ENCODE measurements at regions of chr5 and their contacts with region 1.

Region 1: GRCh38 chr5:79297661-79298060 is 61.7 kb downstream of the JMY start:
- DNase-seq: no peak
- ATAC-seq: peak; percentile 56 to 89 (median 77)
- H3K4me3 ChIP-seq: no peak overlapping the region
- H3K27ac ChIP-seq: no peak overlapping the region
- H3K4me1 ChIP-seq: peaks cover 0 to 12% (median 0%) of the 10 kb centered on the region in 12 donors
- H3K27me3 ChIP-seq: no peaks in the 10 kb centered on the region
- CTCF ChIP-seq: no peak
- POLR2A ChIP-seq: no peak

Region 2: GRCh38 chr5:79318935-79319614 is 21.4 kb after region 1 on chr5:
- intact Hi-C with region 1: loop called in 1 of 10 experiments (anchors 2 kb)
- DNase-seq: no peak
- ATAC-seq: peak; percentile 60 to 98 (median 80)
- H3K4me3 ChIP-seq: no peak overlapping the region
- H3K27ac ChIP-seq: no peak overlapping the region
- H3K4me1 ChIP-seq: peaks cover 0 to 3% (median 0%) of the 10 kb centered on the region in 12 donors
- H3K27me3 ChIP-seq: no peaks in the 10 kb centered on the region
- CTCF ChIP-seq: no peak
- POLR2A ChIP-seq: no peak